Calu3 (cell line): ENCODE measurements at regions of chr21 and their contacts with region 1.

Region 1: GRCh38 chr21:35616090-35616489 is 444.2 kb downstream of the SETD4 start:
- DNase-seq: no peak
- H3K4me3 Mint-ChIP-seq: no peak overlapping the region
- H3K27ac Mint-ChIP-seq: no peak overlapping the region
- H3K4me1 Mint-ChIP-seq: peaks cover 33% of the 10 kb centered on the region
- H3K27me3 Mint-ChIP-seq: no peaks in the 10 kb centered on the region
- CTCF ChIP-seq: no peak

Region 2: DNA sequence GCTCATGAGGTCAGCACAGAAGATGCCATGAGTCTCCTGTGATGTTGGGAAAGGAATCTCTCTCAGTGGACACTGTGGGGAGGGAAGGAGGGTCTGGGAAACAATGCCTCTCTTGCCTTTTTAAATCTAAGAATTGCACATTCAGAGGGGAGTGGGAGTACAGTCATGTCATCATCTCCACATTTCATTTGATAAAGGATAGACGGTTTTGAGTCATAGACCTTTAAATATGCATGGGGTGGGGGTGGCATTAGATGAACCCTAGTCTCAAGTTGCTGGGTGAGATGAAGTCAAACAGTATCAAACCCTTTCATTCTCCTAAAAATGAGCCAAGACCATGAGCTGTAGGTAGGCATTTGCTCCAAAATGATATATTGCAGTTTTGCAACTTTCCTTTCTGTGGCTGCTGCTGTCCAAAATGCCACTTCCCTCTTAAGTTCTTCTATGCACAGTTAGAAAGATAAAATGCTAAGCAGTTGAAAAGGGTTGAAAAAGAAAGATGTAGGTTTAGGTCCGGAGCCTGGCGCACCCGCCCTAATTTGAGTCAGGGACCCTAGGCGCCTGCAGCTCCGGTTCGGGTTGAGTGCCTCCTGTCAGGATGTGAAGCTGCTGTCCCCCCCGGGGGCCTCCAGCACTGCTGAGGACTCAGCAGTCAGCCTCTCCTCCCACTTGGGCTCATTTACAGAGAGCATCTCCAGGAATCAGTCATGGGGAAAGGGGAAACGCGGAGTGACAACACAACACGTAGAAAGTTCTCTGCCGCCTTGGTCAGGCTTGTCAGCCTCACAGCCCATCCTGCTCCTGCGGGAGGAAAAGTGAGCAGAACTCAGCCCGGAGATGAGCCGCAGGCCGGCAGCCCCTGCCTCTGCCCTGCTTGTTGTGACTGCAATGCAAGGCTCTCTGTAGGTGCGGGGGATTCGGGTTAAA is 87.7 kb before region 1 on chr21:
- CTCF ChIA-PET with region 1: no interaction called
- intact Hi-C with region 1: loop called (anchors 10 kb)
- DNase-seq: peak; percentile 4
- H3K4me3 Mint-ChIP-seq: peak overlapping the region; percentile 60
- H3K27ac Mint-ChIP-seq: no peak overlapping the region
- H3K4me1 Mint-ChIP-seq: peaks cover 21% of the 10 kb centered on the region
- H3K27me3 Mint-ChIP-seq: no peaks in the 10 kb centered on the region
- CTCF ChIP-seq: no peak